Activated naive CD4-positive, alpha-beta T cell treated with anti-CD3 and anti-CD28 coated beads for 36 hours (primary cell): ENCODE measurements at regions of chr6 and their contacts with region 1.

Region 1: GRCh38 chr6:106534564-106534982 is 94.7 kb downstream of the RTN4IP1 start:
- DNase-seq: peak; percentile 85
- H3K4me3 Mint-ChIP-seq: no peak overlapping the region
- H3K27ac Mint-ChIP-seq: peak overlapping the region; percentile 81
- H3K4me1 Mint-ChIP-seq: peaks cover 77% of the 10 kb centered on the region
- H3K27me3 Mint-ChIP-seq: no peaks in the 10 kb centered on the region

Region 2: GRCh38 chr6:106546691-106547414 is 12.3 kb after region 1 on chr6:
- CTCF ChIA-PET with region 1: interaction called, 5 read pairs
- intact Hi-C with region 1: loop called (anchors 1 kb)
- DNase-seq: peak; percentile 39
- H3K4me3 Mint-ChIP-seq: no peak overlapping the region
- H3K27ac Mint-ChIP-seq: peak overlapping the region; percentile 78
- H3K4me1 Mint-ChIP-seq: peaks cover 37% of the 10 kb centered on the region
- H3K27me3 Mint-ChIP-seq: no peaks in the 10 kb centered on the region

Region 3: GRCh38 chr6:106556368-106556960 is 21.9 kb after region 1 on chr6:
- CTCF ChIA-PET with region 1: interaction called, 6 read pairs
- intact Hi-C with region 1: loop called (anchors 2 kb)
- DNase-seq: no peak
- H3K4me3 Mint-ChIP-seq: no peak overlapping the region
- H3K27ac Mint-ChIP-seq: no peak overlapping the region
- H3K4me1 Mint-ChIP-seq: peaks cover 18% of the 10 kb centered on the region
- H3K27me3 Mint-ChIP-seq: no peaks in the 10 kb centered on the region